Mammary epithelial cell (primary cell): ENCODE measurements at regions of chr1 and their contacts with region 1.

Region 1: GRCh38 chr1:65148548-65149350 is 746 bp downstream of the AK4 start:
- DNase-seq: peak; percentile 63
- H3K4me3 ChIP-seq: peak overlapping the region; percentile 63 to 94 (median 94)
- H3K27ac ChIP-seq: peak overlapping the region; percentile 49
- H3K4me1 ChIP-seq: peaks cover 11% of the 10 kb centered on the region
- H3K27me3 ChIP-seq: no peaks in the 10 kb centered on the region
- CTCF ChIP-seq: no peak

Region 2: GRCh38 chr1:65075123-65075976 is 73.4 kb before region 1 on chr1:
- CTCF ChIA-PET with region 1: no interaction called
- dilution Hi-C with region 1: no loop called
- in situ Hi-C with region 1: no loop called
- intact Hi-C with region 1: loop called (anchors 2 kb)
- DNase-seq: peak; percentile 36
- H3K4me3 ChIP-seq: no peak overlapping the region
- H3K27ac ChIP-seq: no peak overlapping the region
- H3K4me1 ChIP-seq: no peaks in the 10 kb centered on the region
- H3K27me3 ChIP-seq: no peaks in the 10 kb centered on the region
- CTCF ChIP-seq: peak; percentile 68 to 78

Region 3: DNA sequence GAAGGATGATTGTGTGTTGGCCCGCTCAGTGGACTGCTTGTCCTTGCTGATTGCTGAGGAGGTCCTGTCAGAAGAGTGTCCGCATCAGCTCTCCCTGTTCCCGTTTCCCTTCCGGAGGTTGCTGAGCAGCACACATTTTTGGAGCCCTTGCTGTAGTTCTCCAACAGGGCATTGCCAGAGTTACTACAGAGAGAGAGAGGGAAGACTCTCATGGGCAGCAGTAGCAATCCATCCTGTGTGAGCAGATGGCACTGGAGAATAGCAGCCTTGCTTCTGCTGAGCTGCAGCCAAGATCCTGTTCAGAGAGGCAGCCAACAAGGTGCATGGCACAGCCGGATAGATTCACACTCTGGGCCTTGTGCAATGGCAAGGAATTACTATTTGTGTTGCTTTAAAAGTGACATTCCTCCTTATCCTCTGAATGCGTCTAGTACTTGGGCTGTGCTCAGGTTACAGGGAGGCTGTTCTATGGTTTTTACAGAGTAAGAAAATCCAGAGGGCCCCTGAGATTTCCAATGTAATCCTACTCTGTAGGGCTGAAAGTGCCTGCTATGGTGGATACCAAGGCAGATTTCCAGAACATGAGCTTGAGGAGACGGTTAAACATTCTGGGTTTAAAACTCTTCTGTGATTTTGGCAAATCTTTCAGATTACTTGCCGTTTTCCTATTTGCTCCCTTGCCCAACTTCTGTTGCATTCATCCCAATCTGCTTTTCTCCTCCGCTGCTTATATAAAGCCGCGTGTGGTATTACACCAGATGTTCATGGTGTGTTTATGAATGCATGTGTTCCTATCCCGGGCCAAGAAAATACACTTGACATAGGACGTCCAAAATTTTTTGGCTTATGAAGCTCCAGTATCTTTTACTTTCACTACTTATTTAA is 26.7 kb after region 1 on chr1:
- CTCF ChIA-PET with region 1: no interaction called
- dilution Hi-C with region 1: no loop called
- in situ Hi-C with region 1: no loop called
- intact Hi-C with region 1: loop called (anchors 2 kb)
- DNase-seq: no peak
- H3K4me3 ChIP-seq: no peak overlapping the region
- H3K27ac ChIP-seq: no peak overlapping the region
- H3K4me1 ChIP-seq: peaks cover 68% of the 10 kb centered on the region
- H3K27me3 ChIP-seq: no peaks in the 10 kb centered on the region
- CTCF ChIP-seq: no peak